GM13976 (cell line): ENCODE measurements at regions of chrX and their contacts with region 1.

Region 1: GRCh38 chrX:120514236-120514635 is 45.1 kb upstream of the LAMP2 start:
- DNase-seq: peak; percentile 15
- CTCF ChIP-seq: peak; percentile 33

Region 2: GRCh38 chrX:120769576-120770341 is 255.5 kb after region 1 on chrX:
- in situ Hi-C with region 1: loop called (anchors 10 kb)
- DNase-seq: peak; percentile 27
- CTCF ChIP-seq: no peak